BJ (cell line): ENCODE measurements at regions of chr7 and their contacts with region 1.

Region 1: DNA sequence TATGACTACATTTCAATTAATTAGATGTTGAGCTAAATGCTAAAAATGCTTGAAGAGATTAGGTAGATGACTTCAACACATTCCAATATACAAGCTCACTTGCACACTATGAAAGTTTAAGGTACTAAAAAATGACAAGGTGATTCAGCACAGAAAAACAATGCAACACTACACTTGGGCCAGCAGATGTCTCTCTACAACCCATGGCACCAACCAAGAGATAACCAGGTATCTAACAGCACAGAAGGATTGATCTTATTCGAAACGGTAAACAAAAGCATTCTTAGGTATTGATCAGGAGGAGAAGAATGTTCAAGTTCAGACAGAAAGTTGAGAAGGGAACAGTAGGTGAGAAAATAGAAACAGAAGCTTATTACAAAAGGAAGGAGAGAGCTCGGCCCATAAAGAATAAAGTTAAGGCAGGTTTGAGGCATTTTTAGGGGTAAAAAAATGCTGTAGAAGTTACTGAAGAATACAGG is 248.2 kb upstream of the KLF14 start:
- DNase-seq: no peak
- H3K4me3 ChIP-seq: no peak overlapping the region
- H3K27me3 ChIP-seq: no peaks in the 10 kb centered on the region
- CTCF ChIP-seq: peak; percentile 81

Region 2: DNA sequence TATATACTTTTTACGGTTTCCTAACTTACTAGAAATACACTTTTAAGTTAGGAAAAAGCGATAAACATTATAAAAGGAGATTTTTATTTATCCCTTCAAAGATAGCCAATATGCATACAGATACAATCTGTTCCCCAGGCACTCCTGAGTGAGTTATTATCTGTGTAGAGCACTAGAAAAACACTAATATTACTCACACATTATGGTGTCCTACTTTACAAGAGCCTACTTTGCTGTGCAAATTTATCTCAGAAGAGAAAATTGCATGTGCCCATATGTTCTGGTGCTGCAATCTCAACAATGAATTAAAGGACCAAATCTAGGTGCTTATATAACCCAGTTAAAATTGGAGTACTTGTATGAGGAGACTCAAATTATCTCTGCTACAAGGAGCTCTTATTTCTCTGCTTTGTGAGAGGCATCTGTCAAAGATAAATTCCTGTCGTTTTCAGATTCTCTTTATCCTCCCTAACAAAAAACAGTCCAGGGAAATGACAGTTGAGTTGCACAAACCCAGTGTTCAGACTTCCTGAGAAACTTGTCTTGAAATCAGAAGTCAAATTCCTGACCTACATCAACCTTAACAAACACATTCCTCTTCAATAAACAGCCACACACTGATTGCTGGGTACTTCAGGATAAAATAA is 573.0 kb before region 1 on chr7:
- CTCF ChIA-PET with region 1: no interaction called
- POLR2A ChIA-PET with region 1: no interaction called
- DNase-seq: no peak
- H3K4me3 ChIP-seq: no peak overlapping the region
- H3K27me3 ChIP-seq: no peaks in the 10 kb centered on the region
- CTCF ChIP-seq: no peak

Region 3: DNA sequence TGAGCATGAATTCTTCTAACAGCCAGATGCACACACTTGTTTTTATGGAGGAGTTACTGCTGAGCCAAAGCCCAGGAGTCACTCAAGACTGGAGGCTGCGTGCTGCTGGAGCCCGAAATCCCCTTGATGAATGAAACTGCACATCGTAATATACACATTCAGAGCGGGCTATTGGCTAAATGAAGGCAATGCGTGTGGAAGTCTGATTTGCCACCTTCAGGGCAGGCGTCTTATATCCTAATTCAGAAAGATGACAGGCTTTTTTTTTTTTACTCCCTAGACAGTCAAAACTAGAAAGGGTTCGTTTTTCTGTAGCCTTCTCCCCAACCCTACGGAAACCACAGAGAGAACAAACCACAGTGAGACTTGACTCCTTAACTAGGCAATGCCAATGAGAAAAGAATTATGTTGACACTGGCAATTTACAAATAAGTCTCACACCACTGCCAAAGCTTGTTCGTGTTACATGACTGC is 21.0 kb before region 1 on chr7:
- CTCF ChIA-PET with region 1: interaction called, 15 read pairs
- POLR2A ChIA-PET with region 1: interaction called, 4 read pairs
- DNase-seq: no peak
- H3K4me3 ChIP-seq: no peak overlapping the region
- H3K27me3 ChIP-seq: no peaks in the 10 kb centered on the region
- CTCF ChIP-seq: no peak

Region 4: DNA sequence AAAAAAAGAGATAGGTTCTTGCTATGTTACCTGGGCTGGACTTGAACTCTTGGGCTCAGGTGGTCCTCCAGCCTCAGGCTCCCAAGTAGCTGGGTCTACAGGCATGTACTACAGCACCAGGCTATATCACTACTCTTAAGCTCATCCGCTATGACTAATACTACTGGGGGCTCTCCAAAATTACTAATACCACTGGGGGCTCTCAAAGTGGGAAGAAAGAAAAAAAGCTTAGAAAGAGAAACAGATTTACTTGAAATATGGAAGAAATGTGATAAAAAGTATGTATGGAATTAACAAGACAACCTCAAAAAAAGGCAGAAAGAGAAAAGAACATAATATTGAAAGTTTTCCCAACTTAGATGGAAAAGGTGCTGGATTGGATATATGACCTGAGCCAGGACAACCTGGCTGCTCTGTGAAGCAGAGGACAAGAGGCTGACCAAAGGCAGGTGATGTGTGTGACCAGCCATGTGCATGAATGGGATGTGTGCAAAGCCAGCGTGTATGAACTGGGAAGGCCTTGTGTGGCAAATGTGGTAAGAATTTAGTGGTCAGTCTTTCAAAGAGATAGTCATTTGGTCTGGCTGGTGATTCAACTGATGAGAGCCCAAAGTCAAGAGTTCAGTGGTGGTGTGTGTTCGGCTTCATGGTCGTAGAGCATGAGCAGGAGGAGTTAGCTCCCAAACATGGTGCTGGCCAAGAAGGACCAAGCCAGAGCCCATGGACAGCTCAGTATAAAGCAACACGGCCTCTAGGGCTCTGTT is 15.8 kb before region 1 on chr7:
- CTCF ChIA-PET with region 1: interaction called, 16 read pairs
- POLR2A ChIA-PET with region 1: no interaction called
- DNase-seq: no peak
- H3K4me3 ChIP-seq: no peak overlapping the region
- H3K27me3 ChIP-seq: no peaks in the 10 kb centered on the region
- CTCF ChIP-seq: no peak

Region 5: DNA sequence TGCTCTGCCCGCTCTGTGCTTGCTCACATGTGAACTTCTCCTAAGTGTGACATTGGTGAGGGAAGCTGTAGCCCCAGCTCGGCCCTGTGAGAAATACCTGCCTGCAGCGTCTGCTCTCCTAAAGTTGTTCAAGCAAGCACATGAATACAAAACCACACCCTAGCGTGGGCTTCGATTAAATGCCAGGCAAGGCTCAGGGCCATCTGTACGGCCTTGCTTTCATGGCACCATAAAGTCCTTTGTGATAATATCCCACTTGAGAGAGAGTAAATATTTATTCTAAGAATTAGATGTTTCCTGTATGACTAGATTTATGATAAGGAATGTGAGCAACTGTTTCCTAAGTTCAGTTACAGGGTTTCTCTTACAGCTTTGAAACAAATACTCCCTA is 14.6 kb after region 1 on chr7:
- CTCF ChIA-PET with region 1: interaction called, 31 read pairs
- POLR2A ChIA-PET with region 1: no interaction called
- DNase-seq: no peak
- H3K4me3 ChIP-seq: no peak overlapping the region
- H3K27me3 ChIP-seq: no peaks in the 10 kb centered on the region
- CTCF ChIP-seq: no peak

Region 6: GRCh38 chr7:131007394-131008330 is 25.5 kb after region 1 on chr7:
- CTCF ChIA-PET with region 1: interaction called, 13 read pairs
- POLR2A ChIA-PET with region 1: no interaction called
- DNase-seq: no peak
- H3K4me3 ChIP-seq: no peak overlapping the region
- H3K27me3 ChIP-seq: no peaks in the 10 kb centered on the region
- CTCF ChIP-seq: peak; percentile 57

Region 7: GRCh38 chr7:131040467-131040932 is 58.3 kb after region 1 on chr7:
- CTCF ChIA-PET with region 1: interaction called, 20 read pairs
- POLR2A ChIA-PET with region 1: no interaction called
- DNase-seq: no peak
- H3K4me3 ChIP-seq: no peak overlapping the region
- H3K27me3 ChIP-seq: no peaks in the 10 kb centered on the region
- CTCF ChIP-seq: peak; percentile 93

Region 8: GRCh38 chr7:131501422-131501821 is 519.2 kb after region 1 on chr7:
- CTCF ChIA-PET with region 1: no interaction called
- POLR2A ChIA-PET with region 1: no interaction called
- DNase-seq: no peak
- H3K4me3 ChIP-seq: no peak overlapping the region
- H3K27me3 ChIP-seq: no peaks in the 10 kb centered on the region
- CTCF ChIP-seq: no peak